ENCODE measurements at regions of chr11 and their contacts with region 1.

Region 1: DNA sequence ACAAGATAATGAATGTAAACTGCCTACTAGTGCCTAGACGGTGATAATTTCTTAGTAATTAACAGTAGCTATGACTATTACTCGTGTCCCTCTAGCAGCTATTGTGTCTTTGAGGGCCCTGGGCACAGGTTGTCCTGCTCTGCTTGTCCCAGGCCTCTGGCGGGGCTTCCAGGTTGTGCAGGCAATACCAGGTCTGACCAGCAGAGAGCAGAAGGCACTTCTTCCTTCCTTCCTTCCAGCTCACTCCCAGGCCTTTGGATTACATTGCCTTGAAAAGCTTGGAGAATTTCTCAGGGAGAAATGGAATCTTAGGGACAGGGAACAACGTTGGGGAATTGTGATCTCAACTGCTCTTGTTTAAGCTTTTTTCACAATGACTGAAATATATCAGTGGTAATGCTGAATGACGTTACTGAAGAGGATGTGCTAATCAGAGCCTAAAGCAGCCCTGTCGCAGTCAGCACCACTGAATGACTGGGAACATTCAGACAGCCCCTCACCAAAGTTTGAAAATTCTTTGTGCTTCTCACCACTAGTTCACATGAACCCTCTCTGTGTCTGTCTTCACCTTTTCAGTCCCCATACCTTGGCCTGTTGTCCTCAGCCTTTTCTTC is 8.4 kb upstream of the CCKBR start:
- DNase-seq: peak in 4 of 5 donors; percentile 26 to 35 (median 31)
- H3K4me3 ChIP-seq: no peak overlapping the region
- H3K4me3 Mint-ChIP-seq: no peak overlapping the region
- H3K27ac ChIP-seq: no peak overlapping the region
- H3K27ac Mint-ChIP-seq: no peak overlapping the region
- H3K4me1 ChIP-seq: no peaks in the 10 kb centered on the region
- H3K4me1 Mint-ChIP-seq: no peaks in the 10 kb centered on the region
- H3K27me3 ChIP-seq: no peaks in the 10 kb centered on the region
- H3K27me3 Mint-ChIP-seq: peaks cover 0 to 1% of the 10 kb centered on the region in 2 donors

Region 2: GRCh38 chr11:6240781-6241180 is 10.4 kb before region 1 on chr11:
- CTCF ChIA-PET with region 1: interaction called, 27 read pairs
- POLR2A ChIA-PET with region 1: no interaction called
- intact Hi-C with region 1: no loop called
- DNase-seq: no peak
- H3K4me3 ChIP-seq: no peak overlapping the region
- H3K4me3 Mint-ChIP-seq: no peak overlapping the region
- H3K27ac ChIP-seq: no peak overlapping the region
- H3K27ac Mint-ChIP-seq: peak overlapping the region in 1 of 7 donors; percentile 39
- H3K4me1 ChIP-seq: no peaks in the 10 kb centered on the region
- H3K4me1 Mint-ChIP-seq: no peaks in the 10 kb centered on the region
- H3K27me3 ChIP-seq: no peaks in the 10 kb centered on the region
- H3K27me3 Mint-ChIP-seq: peaks cover 3 to 14% of the 10 kb centered on the region in 2 donors

Region 3: GRCh38 chr11:6315811-6316425 is 64.7 kb after region 1 on chr11:
- CTCF ChIA-PET with region 1: interaction called, 25 read pairs
- POLR2A ChIA-PET with region 1: no interaction called
- intact Hi-C with region 1: loop called (anchors 1 kb)
- DNase-seq: peak in 4 of 5 donors; percentile 9 to 12 (median 10)
- H3K4me3 ChIP-seq: no peak overlapping the region
- H3K4me3 Mint-ChIP-seq: peak overlapping the region in 1 of 8 donors; percentile 21
- H3K27ac ChIP-seq: no peak overlapping the region
- H3K27ac Mint-ChIP-seq: no peak overlapping the region
- H3K4me1 ChIP-seq: peaks cover 11% of the 10 kb centered on the region
- H3K4me1 Mint-ChIP-seq: peaks cover 3 to 18% (median 10%) of the 10 kb centered on the region in 4 donors
- H3K27me3 ChIP-seq: peaks cover 12% of the 10 kb centered on the region
- H3K27me3 Mint-ChIP-seq: peaks cover 34 to 36% of the 10 kb centered on the region in 2 donors

Region 4: GRCh38 chr11:6353367-6353987 is 102.2 kb after region 1 on chr11:
- CTCF ChIA-PET with region 1: interaction called, 60 read pairs
- POLR2A ChIA-PET with region 1: no interaction called
- intact Hi-C with region 1: loop called (anchors 1 kb)
- DNase-seq: peak; percentile 46 to 63 (median 52)
- H3K4me3 ChIP-seq: no peak overlapping the region
- H3K4me3 Mint-ChIP-seq: no peak overlapping the region
- H3K27ac ChIP-seq: no peak overlapping the region
- H3K27ac Mint-ChIP-seq: peak overlapping the region in 2 of 7 donors; percentile 2 to 74
- H3K4me1 ChIP-seq: no peaks in the 10 kb centered on the region
- H3K4me1 Mint-ChIP-seq: peaks cover 0 to 4% (median 1%) of the 10 kb centered on the region in 4 donors
- H3K27me3 ChIP-seq: no peaks in the 10 kb centered on the region
- H3K27me3 Mint-ChIP-seq: peaks cover 0 to 3% of the 10 kb centered on the region in 2 donors

Region 5: DNA sequence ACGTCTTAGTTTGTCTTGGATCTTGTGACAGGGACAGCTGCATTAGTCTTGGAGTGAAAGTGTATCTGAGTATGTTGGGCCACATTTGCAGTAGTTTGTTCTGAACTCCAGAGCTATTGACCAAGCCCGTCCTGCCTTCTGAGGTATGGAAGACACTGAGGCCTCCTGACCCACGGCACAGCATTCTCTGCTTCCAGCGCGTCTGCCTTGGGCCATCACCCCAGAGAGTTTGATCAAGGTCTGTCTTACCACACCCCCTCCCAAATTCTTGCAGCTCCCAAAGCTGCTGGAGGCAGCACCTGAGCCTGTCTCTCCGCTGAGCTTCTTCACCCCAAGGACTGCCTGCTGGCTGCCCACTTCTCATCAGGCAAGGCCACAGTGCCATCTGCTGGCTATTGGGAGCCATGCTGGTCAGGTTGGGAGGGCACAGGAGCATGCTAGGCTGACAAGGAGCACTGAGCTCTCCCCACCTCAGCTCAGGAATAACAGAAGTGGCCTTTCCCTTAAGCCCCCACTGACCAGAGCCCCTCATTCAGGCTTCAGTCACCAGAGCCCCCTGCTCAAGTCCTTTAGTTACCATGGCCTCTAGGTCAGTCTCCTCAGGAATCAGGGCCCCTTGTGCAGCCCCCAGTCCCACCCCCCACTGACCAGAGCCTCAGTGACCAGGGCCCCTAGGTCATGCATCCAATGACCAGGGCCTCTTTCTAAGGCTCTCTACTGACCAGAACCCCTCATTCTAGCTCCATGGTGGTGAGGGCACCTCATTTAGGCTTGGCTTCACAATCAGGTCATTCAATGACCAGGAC is 111.8 kb after region 1 on chr11:
- CTCF ChIA-PET with region 1: interaction called, 22 read pairs
- POLR2A ChIA-PET with region 1: no interaction called
- intact Hi-C with region 1: no loop called
- DNase-seq: peak; percentile 42 to 59 (median 52)
- H3K4me3 ChIP-seq: no peak overlapping the region
- H3K4me3 Mint-ChIP-seq: no peak overlapping the region
- H3K27ac ChIP-seq: no peak overlapping the region
- H3K27ac Mint-ChIP-seq: no peak overlapping the region
- H3K4me1 ChIP-seq: no peaks in the 10 kb centered on the region
- H3K4me1 Mint-ChIP-seq: no peaks in the 10 kb centered on the region
- H3K27me3 ChIP-seq: no peaks in the 10 kb centered on the region
- H3K27me3 Mint-ChIP-seq: no peaks in the 10 kb centered on the region